CD8-positive, alpha-beta memory T cell (primary cell): ENCODE measurements at regions of chr12 and their contacts with region 1.

Region 1: GRCh38 chr12:52023182-52023975 is 16.6 kb downstream of the TAMALIN start:
- DNase-seq: peak; percentile 84 to 93 (median 88)
- H3K4me3 ChIP-seq: peak overlapping the region; percentile 61
- H3K4me3 Mint-ChIP-seq: peak overlapping the region; percentile 75 to 90 (median 86)
- H3K27ac ChIP-seq: no peak overlapping the region
- H3K27ac Mint-ChIP-seq: peak overlapping the region; percentile 75 to 97 (median 88)
- H3K4me1 ChIP-seq: peaks cover 33% of the 10 kb centered on the region
- H3K4me1 Mint-ChIP-seq: peaks cover 31 to 43% (median 41%) of the 10 kb centered on the region in 3 donors
- H3K27me3 ChIP-seq: no peaks in the 10 kb centered on the region
- H3K27me3 Mint-ChIP-seq: no peaks in the 10 kb centered on the region

Region 2: DNA sequence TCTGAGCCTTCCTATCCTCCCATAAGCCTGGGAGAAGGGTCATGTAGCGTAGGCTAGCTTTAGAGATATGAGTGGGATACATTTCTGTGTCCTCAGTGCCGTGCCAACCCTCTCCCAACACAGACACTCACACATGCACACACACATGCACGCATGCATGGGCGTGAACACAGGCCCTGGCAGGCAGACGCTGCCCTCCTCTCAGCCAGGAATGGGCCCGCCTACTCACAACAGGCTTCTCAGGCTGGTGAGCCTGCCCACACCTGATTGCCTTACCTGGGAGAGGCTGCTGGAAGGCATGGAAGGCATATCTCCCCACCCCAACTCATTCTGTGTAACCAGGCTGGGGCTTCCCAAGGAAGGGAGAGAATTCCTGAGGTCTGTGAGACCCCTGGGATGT is 84.7 kb before region 1 on chr12:
- CTCF ChIA-PET with region 1: no interaction called
- POLR2A ChIA-PET with region 1: no interaction called
- DNase-seq: no peak
- H3K4me3 ChIP-seq: no peak overlapping the region
- H3K4me3 Mint-ChIP-seq: no peak overlapping the region
- H3K27ac ChIP-seq: no peak overlapping the region
- H3K27ac Mint-ChIP-seq: no peak overlapping the region
- H3K4me1 ChIP-seq: no peaks in the 10 kb centered on the region
- H3K4me1 Mint-ChIP-seq: no peaks in the 10 kb centered on the region
- H3K27me3 ChIP-seq: no peaks in the 10 kb centered on the region
- H3K27me3 Mint-ChIP-seq: peaks cover 1 to 31% of the 10 kb centered on the region in 2 donors

Region 3: DNA sequence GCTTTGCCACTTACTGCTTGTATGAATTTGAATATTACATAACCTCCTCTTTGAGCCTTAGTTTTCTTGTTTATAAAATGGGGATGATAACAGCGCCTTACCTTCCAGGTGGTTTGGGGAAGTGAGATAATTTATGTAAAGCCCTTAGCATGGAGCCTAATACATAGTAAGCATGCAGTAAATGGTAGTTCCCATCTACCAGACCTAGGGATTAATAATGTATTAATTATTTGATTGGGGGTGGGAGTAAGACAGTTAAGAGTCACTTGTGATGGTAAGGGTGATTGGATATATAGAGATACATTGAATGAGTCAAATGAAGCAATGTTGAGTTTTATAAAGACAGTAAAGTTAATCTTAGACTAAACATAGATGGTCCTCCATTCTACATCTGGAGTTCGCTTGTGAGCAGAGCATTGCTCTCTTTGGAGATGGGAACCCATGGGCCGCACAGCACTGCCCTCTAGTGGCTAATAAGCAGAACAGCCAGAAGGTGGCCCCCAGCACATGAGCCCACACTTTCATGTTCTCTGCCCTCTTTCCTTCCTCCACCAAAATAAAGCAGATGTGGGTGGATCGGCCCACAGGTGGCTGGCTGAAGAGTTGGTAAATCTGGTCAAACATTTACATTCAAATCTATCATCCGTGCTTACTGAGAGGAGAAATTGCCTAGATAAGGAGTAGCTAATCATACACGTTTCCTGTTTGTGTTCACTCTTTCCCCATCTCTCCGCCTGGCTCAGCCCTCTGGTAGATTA is 43.1 kb before region 1 on chr12:
- CTCF ChIA-PET with region 1: interaction called, 12 read pairs
- POLR2A ChIA-PET with region 1: no interaction called
- DNase-seq: peak; percentile 44 to 76 (median 58)
- H3K4me3 ChIP-seq: no peak overlapping the region
- H3K4me3 Mint-ChIP-seq: no peak overlapping the region
- H3K27ac ChIP-seq: no peak overlapping the region
- H3K27ac Mint-ChIP-seq: peak overlapping the region in 2 of 8 donors; percentile 44 to 62
- H3K4me1 ChIP-seq: peaks cover 11% of the 10 kb centered on the region
- H3K4me1 Mint-ChIP-seq: peaks cover 24% of the 10 kb centered on the region in 3 donors
- H3K27me3 ChIP-seq: no peaks in the 10 kb centered on the region
- H3K27me3 Mint-ChIP-seq: peaks cover 0 to 6% of the 10 kb centered on the region in 2 donors

Region 4: GRCh38 chr12:52010152-52010622 is 13.2 kb before region 1 on chr12:
- CTCF ChIA-PET with region 1: interaction called, 488 read pairs
- POLR2A ChIA-PET with region 1: interaction called, 10 read pairs
- DNase-seq: no peak
- H3K4me3 ChIP-seq: no peak overlapping the region
- H3K4me3 Mint-ChIP-seq: no peak overlapping the region
- H3K27ac ChIP-seq: peak overlapping the region; percentile 47
- H3K27ac Mint-ChIP-seq: peak overlapping the region in 2 of 8 donors; percentile 47 to 91
- H3K4me1 ChIP-seq: peaks cover 19% of the 10 kb centered on the region
- H3K4me1 Mint-ChIP-seq: peaks cover 13 to 24% (median 15%) of the 10 kb centered on the region in 3 donors
- H3K27me3 ChIP-seq: no peaks in the 10 kb centered on the region
- H3K27me3 Mint-ChIP-seq: peaks cover 5 to 11% of the 10 kb centered on the region in 2 donors

Region 5: GRCh38 chr12:52058631-52059361 is 35.4 kb after region 1 on chr12:
- CTCF ChIA-PET with region 1: interaction called, 14 read pairs
- POLR2A ChIA-PET with region 1: no interaction called
- DNase-seq: no peak
- H3K4me3 ChIP-seq: no peak overlapping the region
- H3K4me3 Mint-ChIP-seq: no peak overlapping the region
- H3K27ac ChIP-seq: no peak overlapping the region
- H3K27ac Mint-ChIP-seq: no peak overlapping the region
- H3K4me1 ChIP-seq: no peaks in the 10 kb centered on the region
- H3K4me1 Mint-ChIP-seq: no peaks in the 10 kb centered on the region
- H3K27me3 ChIP-seq: no peaks in the 10 kb centered on the region
- H3K27me3 Mint-ChIP-seq: peaks cover 3 to 4% of the 10 kb centered on the region in 2 donors

Region 6: DNA sequence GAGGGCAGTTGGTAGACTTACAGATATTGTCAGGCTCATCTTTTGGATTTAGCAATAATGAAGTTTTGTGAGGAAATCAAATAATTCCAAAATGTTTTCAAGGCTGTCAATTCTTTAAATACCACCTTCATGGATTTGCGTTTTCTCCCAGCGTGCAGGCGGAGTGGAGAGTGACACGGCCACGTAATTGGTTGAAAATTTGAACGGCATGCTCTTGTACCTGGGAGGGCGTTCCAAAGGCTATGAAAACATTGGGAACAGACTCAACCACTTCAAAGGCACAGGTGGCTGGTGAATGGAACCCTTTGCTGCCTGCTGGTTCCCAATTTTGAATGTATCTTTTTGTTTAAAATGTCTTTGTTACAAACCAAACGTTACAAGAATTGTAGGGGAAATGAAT is 68.5 kb after region 1 on chr12:
- CTCF ChIA-PET with region 1: interaction called, 580 read pairs
- POLR2A ChIA-PET with region 1: no interaction called
- DNase-seq: no peak
- H3K4me3 ChIP-seq: no peak overlapping the region
- H3K4me3 Mint-ChIP-seq: no peak overlapping the region
- H3K27ac ChIP-seq: no peak overlapping the region
- H3K27ac Mint-ChIP-seq: no peak overlapping the region
- H3K4me1 ChIP-seq: no peaks in the 10 kb centered on the region
- H3K4me1 Mint-ChIP-seq: no peaks in the 10 kb centered on the region
- H3K27me3 ChIP-seq: peaks cover 2% of the 10 kb centered on the region
- H3K27me3 Mint-ChIP-seq: peaks cover 20 to 68% of the 10 kb centered on the region in 2 donors

Region 7: GRCh38 chr12:52338241-52338960 is 315.0 kb after region 1 on chr12:
- CTCF ChIA-PET with region 1: no interaction called
- POLR2A ChIA-PET with region 1: no interaction called
- DNase-seq: no peak
- H3K4me3 ChIP-seq: no peak overlapping the region
- H3K4me3 Mint-ChIP-seq: peak overlapping the region in 1 of 7 donors; percentile 10
- H3K27ac ChIP-seq: no peak overlapping the region
- H3K27ac Mint-ChIP-seq: no peak overlapping the region
- H3K4me1 ChIP-seq: no peaks in the 10 kb centered on the region
- H3K4me1 Mint-ChIP-seq: no peaks in the 10 kb centered on the region
- H3K27me3 ChIP-seq: no peaks in the 10 kb centered on the region
- H3K27me3 Mint-ChIP-seq: peaks cover 23 to 43% of the 10 kb centered on the region in 2 donors